ENCODE measurements at regions of chr17 and their contacts with region 1.

Region 1: DNA sequence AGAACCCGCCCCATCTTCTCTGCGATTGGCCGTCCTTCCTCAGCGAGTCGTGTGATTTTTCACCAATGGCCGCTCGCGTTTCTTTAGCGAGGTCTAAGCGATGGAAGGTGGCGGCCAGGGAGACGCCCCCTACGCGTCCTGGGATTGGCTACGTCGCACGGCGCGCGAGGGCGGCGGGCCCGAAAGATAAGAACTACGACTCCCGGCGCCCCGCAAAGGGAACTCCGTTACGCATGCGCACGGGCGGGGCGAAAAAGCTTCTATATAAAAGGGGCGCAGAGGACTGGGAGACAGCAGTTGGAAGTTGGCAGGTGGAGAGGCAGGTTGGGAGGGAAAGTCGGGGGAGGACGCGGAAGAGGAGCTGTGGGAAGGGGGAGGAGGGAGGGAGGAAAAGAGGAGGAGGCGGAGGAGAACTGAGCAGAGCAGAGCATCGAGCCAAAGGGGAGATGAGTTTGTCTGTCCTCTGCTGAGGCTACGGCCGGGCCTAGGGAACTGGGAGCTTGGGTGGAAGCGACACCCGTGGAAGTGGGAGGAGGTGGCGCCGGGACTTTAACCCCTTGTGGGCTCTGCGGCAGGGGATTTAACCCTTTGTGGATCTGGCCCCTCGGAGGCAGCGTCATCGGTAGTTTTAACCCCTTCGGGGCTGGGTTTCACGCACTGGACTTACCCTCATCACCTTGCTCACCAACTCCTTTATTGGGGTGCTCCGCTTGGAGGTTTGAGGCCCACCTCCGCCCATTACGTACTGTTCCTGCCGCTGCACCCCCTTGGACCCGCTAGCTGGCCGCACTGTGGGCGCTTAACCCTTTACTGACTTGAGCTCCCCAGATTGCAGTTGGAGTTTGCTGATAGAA is at the start of gene HEXIM1:
- DNase-seq: peak; percentile 99
- H3K4me3 Mint-ChIP-seq: peak within 1 kb of the TSS; percentile 99
- H3K27ac Mint-ChIP-seq: peak within 1 kb of the TSS; percentile 100
- H3K4me1 Mint-ChIP-seq: peaks cover 42% of the 10 kb centered on the region
- H3K27me3 Mint-ChIP-seq: no peaks in the 10 kb centered on the region
- total RNA-seq, gene HEXIM1: 24.9 to 25.4 TPM

Region 2: GRCh38 chr17:44878627-44879221 is 269.7 kb before region 1 on chr17:
- CTCF ChIA-PET with region 1: no interaction called
- POLR2A ChIA-PET with region 1: no interaction called
- intact Hi-C with region 1: no loop called
- DNase-seq: peak; percentile 24
- H3K4me3 Mint-ChIP-seq: no peak overlapping the region
- H3K27ac Mint-ChIP-seq: no peak overlapping the region
- H3K4me1 Mint-ChIP-seq: no peaks in the 10 kb centered on the region
- H3K27me3 Mint-ChIP-seq: no peaks in the 10 kb centered on the region

Region 3: GRCh38 chr17:45060797-45061605 is 87.4 kb before region 1 on chr17 and contains the start of gene NMT1:
- CTCF ChIA-PET with region 1: interaction called, 4 read pairs
- POLR2A ChIA-PET with region 1: interaction called, 7 read pairs
- intact Hi-C with region 1: loop called (anchors 5 kb)
- DNase-seq: peak; percentile 98
- H3K4me3 Mint-ChIP-seq: peak within 1 kb of the TSS; percentile 100
- H3K27ac Mint-ChIP-seq: peak within 1 kb of the TSS; percentile 100
- H3K4me1 Mint-ChIP-seq: peaks cover 48% of the 10 kb centered on the region
- H3K27me3 Mint-ChIP-seq: no peaks in the 10 kb centered on the region
- total RNA-seq, gene NMT1: 158 TPM

Region 4: DNA sequence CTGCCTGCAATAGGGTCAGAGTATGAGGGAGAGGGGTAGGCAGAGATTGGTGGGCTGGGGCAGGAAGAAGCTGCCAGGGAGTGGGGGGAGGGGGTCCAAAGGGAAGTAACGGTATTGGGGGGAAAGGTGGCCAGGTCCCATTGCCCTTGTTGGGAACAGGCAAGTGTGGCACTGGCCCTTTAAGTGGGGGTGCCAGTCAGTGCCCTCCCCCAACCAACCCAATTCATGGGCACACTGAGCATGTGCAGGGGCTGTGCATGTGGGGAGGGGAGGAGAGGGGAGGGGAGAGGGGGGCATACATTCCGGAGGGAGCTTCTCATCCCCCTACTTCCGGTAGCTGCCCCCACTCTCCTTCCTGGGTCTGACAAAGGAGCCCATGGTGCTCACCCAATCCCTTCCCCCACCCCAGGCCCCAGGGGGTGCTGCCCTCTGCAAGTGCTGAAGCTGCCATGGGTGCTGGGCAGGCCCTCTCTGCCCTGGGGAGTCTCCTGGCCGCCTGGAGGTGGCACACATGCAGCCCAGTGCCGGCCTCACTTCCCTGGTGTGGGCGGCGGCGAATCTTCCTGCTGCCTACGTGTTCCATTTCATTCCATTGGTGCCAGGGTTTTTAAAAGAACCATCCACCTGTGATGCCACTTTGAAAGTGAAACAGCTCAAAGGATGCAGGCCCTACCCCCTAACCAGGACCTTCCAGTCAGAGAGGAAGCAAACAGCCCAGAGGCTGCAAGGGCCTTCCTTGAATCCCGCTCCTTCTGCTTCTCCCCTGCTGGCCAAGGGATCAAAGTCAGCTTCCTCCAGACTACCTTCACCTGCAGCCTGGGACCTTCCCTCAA is 24.3 kb after region 1 on chr17:
- CTCF ChIA-PET with region 1: interaction called, 41 read pairs
- POLR2A ChIA-PET with region 1: interaction called, 20 read pairs
- intact Hi-C with region 1: loop called (anchors 2 kb)
- DNase-seq: peak; percentile 68
- H3K4me3 Mint-ChIP-seq: peak overlapping the region; percentile 54
- H3K27ac Mint-ChIP-seq: peak overlapping the region; percentile 82
- H3K4me1 Mint-ChIP-seq: peaks cover 11% of the 10 kb centered on the region
- H3K27me3 Mint-ChIP-seq: no peaks in the 10 kb centered on the region

Region 5: DNA sequence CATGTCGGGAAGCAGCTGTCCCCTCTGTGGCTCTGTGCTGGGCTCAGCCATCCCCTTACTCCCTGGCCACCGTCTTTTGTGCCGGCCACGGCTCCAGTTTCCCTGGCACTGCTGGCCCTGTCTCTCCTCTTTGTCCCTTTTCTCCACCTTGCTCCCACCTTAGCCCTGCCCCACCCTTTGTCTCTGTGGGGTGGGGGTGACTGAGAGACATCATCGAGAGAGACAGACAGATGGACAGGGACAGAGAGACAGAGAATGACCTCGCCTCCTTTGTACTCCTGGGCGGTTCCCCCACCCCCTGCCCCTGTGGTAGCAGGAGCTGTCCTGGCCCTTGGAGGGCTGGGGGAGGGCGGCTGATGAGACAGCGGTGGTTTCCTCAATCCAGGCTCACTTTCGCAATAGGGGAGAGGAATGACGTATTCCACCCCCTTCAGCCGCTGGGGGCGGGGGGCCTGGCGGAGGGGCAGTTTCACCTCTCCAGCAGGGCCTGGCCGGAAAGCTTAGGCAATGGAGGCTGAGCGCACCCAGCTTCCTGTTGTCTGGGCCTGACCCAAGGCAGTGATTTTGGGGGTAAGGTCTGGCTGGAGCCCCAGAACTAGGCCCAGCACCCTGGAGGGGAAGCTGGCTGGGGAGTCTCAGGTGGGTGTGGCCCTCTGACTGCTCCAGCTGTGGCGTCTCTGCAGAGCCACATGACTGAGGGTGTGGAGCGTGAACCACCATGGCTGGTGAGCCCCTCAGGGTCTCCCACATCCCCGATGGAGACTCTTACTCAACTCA is 80.5 kb after region 1 on chr17:
- CTCF ChIA-PET with region 1: interaction called, 38 read pairs
- POLR2A ChIA-PET with region 1: interaction called, 45 read pairs
- intact Hi-C with region 1: loop called (anchors 1 kb)
- DNase-seq: peak; percentile 96
- H3K4me3 Mint-ChIP-seq: peak overlapping the region; percentile 100
- H3K27ac Mint-ChIP-seq: peak overlapping the region; percentile 100
- H3K4me1 Mint-ChIP-seq: peaks cover 86% of the 10 kb centered on the region
- H3K27me3 Mint-ChIP-seq: no peaks in the 10 kb centered on the region

Region 6: DNA sequence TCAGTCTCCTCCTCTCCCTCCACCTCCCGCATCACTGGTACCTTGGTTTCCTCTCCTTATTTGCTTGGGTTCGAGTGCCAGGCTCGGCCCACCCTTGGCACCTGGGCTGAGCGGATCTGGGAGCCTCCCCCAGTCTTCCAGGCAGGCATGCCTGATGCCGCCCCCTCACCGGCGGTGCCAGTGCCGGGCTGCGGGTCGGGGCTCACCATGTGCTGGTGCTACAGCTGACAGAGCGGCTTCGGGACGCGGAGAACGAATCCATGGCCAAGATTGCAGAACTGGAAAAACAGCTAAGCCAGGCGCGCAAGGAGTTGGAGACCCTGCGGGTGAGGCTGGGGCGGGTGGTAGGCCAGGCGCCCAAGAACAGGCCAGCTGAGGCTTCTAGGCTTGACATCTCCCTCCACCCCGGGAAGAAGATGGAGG is 92.5 kb after region 1 on chr17:
- CTCF ChIA-PET with region 1: no interaction called
- POLR2A ChIA-PET with region 1: no interaction called
- intact Hi-C with region 1: no loop called
- DNase-seq: no peak
- H3K4me3 Mint-ChIP-seq: no peak overlapping the region
- H3K27ac Mint-ChIP-seq: peak overlapping the region; percentile 5
- H3K4me1 Mint-ChIP-seq: peaks cover 27% of the 10 kb centered on the region
- H3K27me3 Mint-ChIP-seq: no peaks in the 10 kb centered on the region

Region 7: DNA sequence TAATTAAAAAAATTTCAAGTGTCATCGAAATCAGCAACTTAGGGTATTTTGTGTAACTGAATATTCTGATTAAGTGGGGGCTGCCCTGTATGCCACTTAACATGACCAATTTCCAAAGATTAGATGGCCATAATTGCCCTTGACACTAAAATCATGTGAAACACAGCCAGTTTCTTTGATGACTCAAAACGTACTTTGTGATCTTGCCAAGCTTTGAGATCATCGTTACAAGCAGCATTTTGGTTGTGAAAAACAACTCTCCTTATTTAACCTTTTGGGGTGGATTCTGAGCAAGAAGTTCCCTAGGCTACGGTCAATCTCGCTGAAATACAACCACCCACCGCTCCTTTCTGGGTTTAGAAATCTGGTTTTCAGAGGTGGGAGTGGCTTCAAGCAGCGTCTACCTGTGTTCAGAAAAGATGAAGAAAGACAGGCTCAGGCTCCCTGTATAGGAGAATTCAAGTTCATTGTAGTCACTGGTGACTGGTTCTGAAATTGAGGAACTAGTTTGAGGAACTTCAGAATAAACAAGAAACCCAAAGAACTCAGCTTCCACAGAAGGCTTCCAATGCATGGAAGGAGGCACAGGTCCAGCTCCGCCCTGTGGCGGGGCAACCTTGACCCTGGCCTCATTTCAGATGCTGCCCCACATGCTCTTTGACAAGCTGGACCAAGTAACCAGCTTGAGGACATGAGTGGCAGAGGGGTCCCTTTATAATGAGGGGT is 159.0 kb after region 1 on chr17:
- CTCF ChIA-PET with region 1: interaction called, 4 read pairs
- POLR2A ChIA-PET with region 1: interaction called, 19 read pairs
- intact Hi-C with region 1: loop called (anchors 2 kb)
- DNase-seq: peak; percentile 80
- H3K4me3 Mint-ChIP-seq: peak overlapping the region; percentile 53
- H3K27ac Mint-ChIP-seq: peak overlapping the region; percentile 97
- H3K4me1 Mint-ChIP-seq: peaks cover 84% of the 10 kb centered on the region
- H3K27me3 Mint-ChIP-seq: no peaks in the 10 kb centered on the region